ENCODE measurements at regions of chr20 and their contacts with region 1.

Region 1: GRCh38 chr20:33781133-33781532 is 30.0 kb upstream of the CHMP4B start:
- DNase-seq: no peak
- ATAC-seq: no peak
- H3K4me3 ChIP-seq: no peak overlapping the region
- H3K4me3 Mint-ChIP-seq: no peak overlapping the region
- H3K27ac ChIP-seq: no peak overlapping the region
- H3K27ac Mint-ChIP-seq: no peak overlapping the region
- H3K4me1 ChIP-seq: peaks cover 0 to 5% of the 10 kb centered on the region in 2 experiments
- H3K4me1 Mint-ChIP-seq: peaks cover 15 to 18% (median 17%) of the 10 kb centered on the region in 3 donors
- H3K27me3 ChIP-seq: no peaks in the 10 kb centered on the region
- H3K27me3 Mint-ChIP-seq: no peaks in the 10 kb centered on the region

Region 2: DNA sequence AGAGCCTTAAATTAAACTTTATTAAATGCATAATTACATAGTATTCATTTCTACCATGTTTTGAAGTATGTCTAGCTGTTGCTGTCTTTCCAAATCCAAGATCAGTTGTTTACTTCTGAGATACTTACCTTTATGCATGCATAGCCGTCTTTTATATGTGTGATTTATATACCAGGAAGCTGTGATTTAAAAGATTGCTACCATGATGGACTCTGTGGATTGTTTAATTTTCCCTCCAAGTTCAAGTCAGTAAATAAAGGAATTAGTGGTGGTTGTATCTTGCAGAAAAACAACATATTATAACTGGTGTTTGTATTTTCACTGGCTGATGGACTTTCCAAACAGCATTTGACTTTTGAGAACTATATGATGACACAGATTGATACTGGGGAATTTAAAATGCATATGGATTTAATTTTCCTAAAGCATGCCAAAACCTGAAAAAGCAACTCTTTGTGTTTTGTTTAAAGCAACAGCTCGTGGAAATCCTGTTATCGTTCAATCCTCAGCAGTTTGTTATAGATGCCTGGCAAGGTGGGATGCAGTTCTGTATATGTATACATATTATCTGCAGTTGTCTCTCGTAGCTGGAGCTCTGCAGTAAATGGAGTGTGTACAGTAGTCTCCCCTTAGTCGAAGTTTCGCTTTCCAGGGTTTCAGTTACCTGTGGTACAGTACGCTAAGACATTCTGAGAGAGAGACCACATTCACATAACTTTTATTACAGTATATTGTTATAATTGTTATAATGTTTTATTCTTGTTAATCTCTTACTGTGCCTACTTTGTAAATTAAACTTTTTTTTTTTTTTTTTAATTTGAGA is 214.1 kb before region 1 on chr20:
- CTCF ChIA-PET with region 1: no interaction called
- POLR2A ChIA-PET with region 1: interaction called in 1 of 2 experiments, 18 read pairs
- DNase-seq: no peak
- ATAC-seq: no peak
- H3K4me3 ChIP-seq: no peak overlapping the region
- H3K4me3 Mint-ChIP-seq: no peak overlapping the region
- H3K27ac ChIP-seq: no peak overlapping the region
- H3K27ac Mint-ChIP-seq: no peak overlapping the region
- H3K4me1 ChIP-seq: peaks cover 0 to 2% of the 10 kb centered on the region in 2 experiments
- H3K4me1 Mint-ChIP-seq: peaks cover 41 to 45% (median 41%) of the 10 kb centered on the region in 3 donors
- H3K27me3 ChIP-seq: no peaks in the 10 kb centered on the region
- H3K27me3 Mint-ChIP-seq: no peaks in the 10 kb centered on the region